MCF 10A (cell line): ENCODE measurements at regions of chr12 and their contacts with region 1.

Region 1: GRCh38 chr12:101792051-101792931 is 38.5 kb downstream of the GNPTAB start:
- DNase-seq: peak; percentile 4
- H3K4me3 Mint-ChIP-seq: no peak overlapping the region
- H3K27ac Mint-ChIP-seq: no peak overlapping the region
- H3K4me1 Mint-ChIP-seq: no peaks in the 10 kb centered on the region
- H3K27me3 Mint-ChIP-seq: no peaks in the 10 kb centered on the region
- CTCF ChIP-seq: no peak

Region 2: GRCh38 chr12:101628676-101629075 is 163.6 kb before region 1 on chr12:
- CTCF ChIA-PET with region 1: no interaction called
- POLR2A ChIA-PET with region 1: no interaction called
- intact Hi-C with region 1: no loop called
- DNase-seq: no peak
- H3K4me3 Mint-ChIP-seq: no peak overlapping the region
- H3K27ac Mint-ChIP-seq: no peak overlapping the region
- H3K4me1 Mint-ChIP-seq: no peaks in the 10 kb centered on the region
- H3K27me3 Mint-ChIP-seq: no peaks in the 10 kb centered on the region
- CTCF ChIP-seq: no peak

Region 3: GRCh38 chr12:101823891-101824290 is 31.6 kb after region 1 on chr12:
- CTCF ChIA-PET with region 1: interaction called, 61 read pairs
- POLR2A ChIA-PET with region 1: no interaction called
- intact Hi-C with region 1: no loop called
- DNase-seq: peak; percentile 65
- H3K4me3 Mint-ChIP-seq: no peak overlapping the region
- H3K27ac Mint-ChIP-seq: no peak overlapping the region
- H3K4me1 Mint-ChIP-seq: peaks cover 8% of the 10 kb centered on the region
- H3K27me3 Mint-ChIP-seq: no peaks in the 10 kb centered on the region
- CTCF ChIP-seq: no peak

Region 4: GRCh38 chr12:101902641-101903040 is 110.3 kb after region 1 on chr12:
- CTCF ChIA-PET with region 1: no interaction called
- POLR2A ChIA-PET with region 1: no interaction called
- intact Hi-C with region 1: no loop called
- DNase-seq: no peak
- H3K4me3 Mint-ChIP-seq: no peak overlapping the region
- H3K27ac Mint-ChIP-seq: no peak overlapping the region
- H3K4me1 Mint-ChIP-seq: no peaks in the 10 kb centered on the region
- H3K27me3 Mint-ChIP-seq: no peaks in the 10 kb centered on the region
- CTCF ChIP-seq: no peak

Region 5: GRCh38 chr12:102429211-102430154 is 637.2 kb after region 1 on chr12:
- CTCF ChIA-PET with region 1: no interaction called
- POLR2A ChIA-PET with region 1: no interaction called
- intact Hi-C with region 1: no loop called
- DNase-seq: no peak
- H3K4me3 Mint-ChIP-seq: no peak overlapping the region
- H3K27ac Mint-ChIP-seq: no peak overlapping the region
- H3K4me1 Mint-ChIP-seq: no peaks in the 10 kb centered on the region
- H3K27me3 Mint-ChIP-seq: no peaks in the 10 kb centered on the region
- CTCF ChIP-seq: no peak